Aorta (tissue), 5 donors: ENCODE measurements at regions of chr11 and their contacts with region 1.

Region 1: GRCh38 chr11:330694-331357 is 10.2 kb upstream of the IFITM3 start:
- DNase-seq: peak in 1 of 2 donors; percentile 72
- ATAC-seq: no peak
- H3K4me3 ChIP-seq: no peak overlapping the region
- H3K27ac ChIP-seq: no peak overlapping the region
- H3K4me1 ChIP-seq: no peaks in the 10 kb centered on the region
- H3K27me3 ChIP-seq: no peaks in the 10 kb centered on the region

Region 2: GRCh38 chr11:350723-351255 is 20.0 kb after region 1 on chr11:
- intact Hi-C with region 1: loop called in 1 of 2 experiments (anchors 2 kb)
- DNase-seq: peak in 1 of 2 donors; percentile 45
- ATAC-seq: no peak
- H3K4me3 ChIP-seq: no peak overlapping the region
- H3K27ac ChIP-seq: no peak overlapping the region
- H3K4me1 ChIP-seq: no peaks in the 10 kb centered on the region
- H3K27me3 ChIP-seq: no peaks in the 10 kb centered on the region

Region 3: GRCh38 chr11:456533-456932 is 125.7 kb after region 1 on chr11:
- intact Hi-C with region 1: no loop called
- DNase-seq: no peak
- ATAC-seq: no peak
- H3K4me3 ChIP-seq: no peak overlapping the region
- H3K27ac ChIP-seq: no peak overlapping the region
- H3K4me1 ChIP-seq: no peaks in the 10 kb centered on the region
- H3K27me3 ChIP-seq: no peaks in the 10 kb centered on the region

Region 4: DNA sequence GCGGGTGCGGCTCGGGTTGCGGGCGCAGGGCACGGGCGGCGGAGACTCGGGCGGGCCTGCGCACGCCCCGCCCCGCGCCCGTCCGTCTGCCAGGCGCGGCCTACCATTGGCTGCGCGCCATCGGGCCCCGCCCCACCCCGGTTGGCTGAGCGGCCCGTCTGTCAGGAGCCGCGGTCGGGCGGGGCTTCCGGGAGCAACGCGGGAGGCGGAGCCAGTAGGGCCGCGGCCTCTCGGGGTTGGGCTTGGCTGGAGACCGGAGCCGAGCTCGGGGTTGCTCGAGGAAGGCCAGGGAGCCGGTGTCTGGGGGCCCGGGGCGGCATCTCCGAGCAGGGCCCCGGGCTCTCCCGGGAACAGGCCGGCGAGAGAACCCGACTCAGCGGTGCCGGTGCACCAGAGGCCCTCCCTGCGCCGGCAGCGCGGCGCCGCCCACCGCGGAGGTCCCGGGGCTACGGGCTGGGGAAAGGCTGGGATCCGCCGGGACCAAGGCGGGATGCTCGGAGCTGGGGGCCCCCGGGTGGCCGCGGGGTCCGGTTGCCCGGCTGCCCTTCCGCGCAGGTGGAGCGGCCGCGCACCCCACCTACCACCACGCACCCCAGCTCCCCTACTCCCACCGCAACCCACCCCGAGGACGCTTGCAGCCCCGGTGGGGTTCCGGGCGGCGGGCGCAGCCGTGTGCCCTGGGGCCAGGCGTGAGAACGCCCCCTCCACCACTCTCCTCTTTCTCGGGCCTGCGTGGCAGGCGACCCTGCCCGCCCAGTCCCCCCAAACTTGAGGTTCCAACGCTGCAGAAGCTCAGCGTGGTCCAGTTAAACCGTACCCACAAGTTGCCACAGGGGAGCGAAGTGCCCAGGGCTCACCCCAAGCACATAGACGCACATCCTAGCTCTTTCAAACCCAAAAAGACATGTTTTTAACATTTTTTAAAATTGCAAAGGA is 205.0 kb after region 1 on chr11 and contains the start of gene HRAS:
- intact Hi-C with region 1: no loop called
- DNase-seq: peak; percentile 96 to 97
- ATAC-seq: peak; percentile 93
- H3K4me3 ChIP-seq: peak within 1 kb of the TSS; percentile 73 to 87
- H3K27ac ChIP-seq: no peak within 1 kb of the TSS
- H3K4me1 ChIP-seq: no peaks in the 10 kb centered on the region
- H3K27me3 ChIP-seq: no peaks in the 10 kb centered on the region
- total RNA-seq, gene HRAS: 35.9 to 44.9 TPM